ENCODE measurements at regions of chr4 and their contacts with region 1.

Region 1: DNA sequence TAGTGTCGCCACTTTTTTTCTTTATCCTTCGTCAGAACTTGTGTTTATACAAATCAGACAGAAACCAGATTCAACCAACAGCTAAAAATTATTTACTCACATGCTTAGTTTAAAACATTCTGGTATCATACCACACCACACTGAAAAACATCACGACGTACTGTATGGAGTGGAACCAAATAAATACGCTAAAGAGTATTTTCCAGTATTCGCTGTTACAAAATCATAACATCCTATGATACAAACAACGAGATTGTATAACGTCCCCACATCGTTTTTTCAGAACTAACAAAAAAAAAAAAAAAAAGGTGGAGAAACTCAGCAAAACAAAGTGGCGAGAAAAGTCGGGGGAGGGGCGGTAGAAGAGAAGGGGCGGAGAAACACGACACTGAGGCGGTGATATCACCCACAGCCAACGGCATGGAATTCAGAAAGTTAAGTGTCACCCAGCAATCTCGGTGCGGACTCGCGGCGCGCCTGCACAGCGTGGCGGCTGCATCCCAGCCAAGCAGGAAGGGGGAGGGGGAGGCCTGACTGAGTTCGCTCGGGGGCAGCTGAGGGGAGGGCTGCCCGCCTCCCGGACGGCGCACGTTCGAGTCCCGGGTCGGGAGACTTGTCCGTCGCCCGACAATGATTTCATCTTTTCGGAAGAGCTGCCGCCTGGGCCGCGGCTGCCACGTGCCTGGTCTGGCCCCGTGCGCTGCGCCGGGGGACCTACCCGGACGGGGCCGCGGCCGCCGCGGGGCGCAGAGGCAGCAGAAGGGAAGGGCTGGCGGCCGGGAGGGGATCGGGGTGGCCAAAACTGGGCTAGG is 920 bp downstream of the SETD7 start:
- DNase-seq: peak; percentile 86
- H3K4me3 ChIP-seq: peak overlapping the region; percentile 63 to 97
- H3K27ac ChIP-seq: peak overlapping the region; percentile 61 to 89
- H3K4me1 ChIP-seq: peaks cover 27 to 35% of the 10 kb centered on the region in 2 experiments; a peak in 3 of 4 replicates
- H3K27me3 ChIP-seq: no peaks in the 10 kb centered on the region; the same call in 1 of the 2 replicates
- CTCF ChIP-seq: no peak
- EP300 ChIP-seq: no peak
- RAD21 ChIP-seq: 0 out of 2 replicates have a peak, but pooled peaks have one; percentile 10

Region 2: GRCh38 chr4:139441029-139441428 is 114.1 kb before region 1 on chr4:
- CTCF ChIA-PET with region 1: no interaction called
- POLR2A ChIA-PET with region 1: no interaction called
- DNase-seq: no peak
- H3K4me3 ChIP-seq: no peak overlapping the region
- H3K27ac ChIP-seq: no peak overlapping the region
- H3K4me1 ChIP-seq: no peaks in the 10 kb centered on the region
- H3K27me3 ChIP-seq: no peaks in the 10 kb centered on the region
- CTCF ChIP-seq: no peak
- EP300 ChIP-seq: no peak
- RAD21 ChIP-seq: no peak

Region 3: DNA sequence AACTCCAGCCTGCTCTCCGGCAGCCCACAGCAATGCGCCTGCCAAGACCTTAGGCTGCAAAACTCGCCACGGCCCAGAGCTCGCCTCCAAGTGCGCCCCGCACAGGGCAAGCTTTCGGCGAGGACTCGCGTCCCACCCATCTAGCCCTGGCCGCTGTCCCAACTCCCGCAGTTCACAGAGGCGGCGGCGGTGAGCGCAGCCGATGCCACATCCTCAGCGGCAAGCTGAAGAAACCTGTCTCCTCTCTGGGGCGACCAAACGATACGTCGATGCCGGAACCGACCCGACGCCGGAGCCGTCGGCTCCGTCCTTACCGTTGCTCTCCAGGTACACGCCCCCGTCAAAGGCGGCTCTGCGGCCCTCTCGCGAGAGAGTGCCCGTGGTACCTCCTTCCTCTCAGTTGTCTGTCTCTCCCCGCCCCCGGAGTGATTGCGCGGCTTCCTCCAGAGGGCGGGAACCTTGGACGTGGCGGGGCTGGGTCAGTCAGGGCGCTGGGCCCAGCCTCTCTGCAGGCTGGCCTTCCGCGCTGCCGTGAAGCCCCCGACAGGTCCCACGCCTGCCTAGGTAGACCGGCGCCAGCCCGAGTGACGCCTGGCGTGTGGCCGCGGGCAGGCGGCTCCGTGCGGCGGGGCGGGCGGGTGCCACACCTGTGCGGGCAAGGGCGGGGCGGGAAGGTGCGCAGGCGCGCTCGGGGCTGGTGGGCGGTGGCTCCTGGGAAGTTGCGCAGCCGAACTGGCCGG is 101.6 kb before region 1 on chr4:
- CTCF ChIA-PET with region 1: no interaction called
- POLR2A ChIA-PET with region 1: interaction called, 11 read pairs
- DNase-seq: peak; percentile 95
- H3K4me3 ChIP-seq: peak overlapping the region; percentile 99 to 100
- H3K27ac ChIP-seq: peak overlapping the region; percentile 88 to 96
- H3K4me1 ChIP-seq: peaks cover 16 to 17% of the 10 kb centered on the region in 2 experiments; a peak in 3 of 4 replicates
- H3K27me3 ChIP-seq: no peaks in the 10 kb centered on the region
- CTCF ChIP-seq: peak; percentile 36; the same call in 1 of the 2 replicates
- EP300 ChIP-seq: no peak
- RAD21 ChIP-seq: no peak

Region 4: DNA sequence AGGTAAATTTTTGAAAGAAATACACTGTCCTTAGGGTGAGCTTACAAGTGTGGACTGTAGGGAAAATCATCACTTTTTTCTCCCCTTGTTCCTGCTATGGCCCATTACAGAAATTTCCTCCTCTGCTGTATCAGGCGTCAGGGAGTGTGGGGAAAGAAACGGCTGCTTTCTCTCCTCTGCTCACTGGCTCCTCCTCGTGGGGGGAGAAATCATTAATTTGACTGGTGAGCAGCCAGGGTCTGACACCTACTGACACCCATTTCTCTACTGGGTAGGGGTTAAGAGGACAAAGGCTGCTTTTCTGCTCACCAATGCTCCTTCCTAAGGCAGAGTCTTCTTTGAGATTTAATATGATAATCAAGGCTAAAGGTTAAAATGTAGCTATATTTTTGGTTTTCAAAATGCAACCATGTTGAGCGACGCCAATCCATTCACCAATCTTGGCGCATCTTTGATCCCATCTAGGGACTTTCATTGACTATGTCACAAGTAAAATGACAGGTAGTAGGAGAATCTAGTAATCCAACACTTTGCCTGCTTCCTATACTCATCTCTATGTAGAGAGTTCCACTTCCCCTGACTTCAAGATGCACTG is 24.2 kb before region 1 on chr4:
- CTCF ChIA-PET with region 1: interaction called, 13 read pairs
- POLR2A ChIA-PET with region 1: no interaction called
- DNase-seq: peak; percentile 68
- H3K4me3 ChIP-seq: no peak overlapping the region; a peak in 1 of 4 replicates
- H3K27ac ChIP-seq: no peak overlapping the region
- H3K4me1 ChIP-seq: peaks cover 0 to 3% of the 10 kb centered on the region in 2 experiments; a peak in 1 of 4 replicates
- H3K27me3 ChIP-seq: no peaks in the 10 kb centered on the region
- CTCF ChIP-seq: peak; percentile 62
- EP300 ChIP-seq: no peak
- RAD21 ChIP-seq: peak; percentile 64

Region 5: DNA sequence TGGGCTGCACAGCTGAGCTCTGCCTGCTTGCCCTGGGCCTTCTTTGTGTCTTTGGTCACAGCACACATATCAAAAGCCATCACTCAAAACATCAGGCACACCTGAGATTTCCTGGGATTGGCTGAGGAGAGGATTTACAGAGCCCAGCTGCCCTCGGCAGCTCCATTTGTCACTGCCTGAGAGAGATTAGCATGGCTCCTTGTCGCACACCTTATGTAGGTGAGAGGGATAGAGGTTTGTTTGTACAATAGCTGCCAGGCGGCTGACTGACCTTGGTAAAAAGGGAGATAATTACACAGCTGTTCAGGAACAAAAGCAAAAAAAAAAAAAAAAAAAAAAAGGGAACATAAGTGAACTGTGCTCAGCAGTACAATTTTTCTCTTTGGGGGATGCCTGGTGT is 173.7 kb after region 1 on chr4:
- CTCF ChIA-PET with region 1: no interaction called
- POLR2A ChIA-PET with region 1: no interaction called
- DNase-seq: no peak
- H3K4me3 ChIP-seq: no peak overlapping the region
- H3K27ac ChIP-seq: no peak overlapping the region
- H3K4me1 ChIP-seq: peaks cover 0 to 15% of the 10 kb centered on the region in 2 experiments; a peak in 2 of 4 replicates
- H3K27me3 ChIP-seq: no peaks in the 10 kb centered on the region
- CTCF ChIP-seq: no peak
- EP300 ChIP-seq: no peak
- RAD21 ChIP-seq: no peak

Measured in SK-N-SH (cell line).